Panc1 (cell line): ENCODE measurements at regions of chr1 and their contacts with region 1.

Region 1: GRCh38 chr1:88998716-88999115 is 6.3 kb upstream of the KYAT3 start:
- DNase-seq: peak; percentile 72
- ATAC-seq: peak; percentile 96
- H3K4me3 ChIP-seq: no peak overlapping the region
- H3K27ac ChIP-seq: no peak overlapping the region
- H3K4me1 ChIP-seq: no peaks in the 10 kb centered on the region
- H3K27me3 ChIP-seq: peaks cover 4% of the 10 kb centered on the region; the same call in 1 of the 2 replicates
- CTCF ChIP-seq: peak; percentile 67

Region 2: GRCh38 chr1:88983791-88984559 is 14.7 kb before region 1 on chr1:
- CTCF ChIA-PET with region 1: interaction called, 4 read pairs
- POLR2A ChIA-PET with region 1: interaction called, 14 read pairs
- in situ Hi-C with region 1: no loop called
- intact Hi-C with region 1: no loop called
- DNase-seq: peak; percentile 64
- ATAC-seq: peak; percentile 87
- H3K4me3 ChIP-seq: peak overlapping the region; percentile 46 to 61
- H3K27ac ChIP-seq: peak overlapping the region; percentile 68
- H3K4me1 ChIP-seq: peaks cover 17% of the 10 kb centered on the region
- H3K27me3 ChIP-seq: no peaks in the 10 kb centered on the region
- CTCF ChIP-seq: peak; percentile 86

Region 3: DNA sequence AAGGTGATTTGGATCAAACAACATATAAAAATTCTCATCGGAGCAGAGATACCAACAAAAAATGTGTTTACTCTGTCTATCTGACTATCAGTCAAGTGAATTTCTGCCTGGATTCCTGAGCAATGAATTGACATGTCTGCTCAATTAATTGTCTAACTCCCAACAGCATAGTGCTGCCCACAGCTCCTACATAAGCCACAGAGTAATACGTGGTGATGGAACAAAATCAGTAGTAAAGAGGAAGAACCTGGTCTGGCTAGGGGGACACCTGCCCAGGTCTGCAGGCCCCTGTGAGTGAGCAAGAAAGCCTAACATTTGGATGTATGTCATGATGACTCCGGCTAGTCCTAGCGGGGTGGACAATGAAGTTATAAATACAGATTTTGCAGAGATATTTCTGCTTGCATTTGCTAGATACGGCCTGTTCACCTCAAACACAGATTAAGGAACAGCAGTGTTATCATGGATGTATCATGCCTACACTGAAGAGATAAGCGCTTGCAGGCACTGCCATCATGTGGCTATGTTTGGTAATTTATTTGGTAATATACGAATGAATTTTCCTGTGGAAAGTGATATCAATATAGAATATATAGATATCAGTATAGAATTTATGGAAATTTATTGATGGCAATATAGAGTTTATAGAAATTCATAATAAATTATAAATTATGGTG is 456.3 kb after region 1 on chr1:
- CTCF ChIA-PET with region 1: interaction called, 3 read pairs
- POLR2A ChIA-PET with region 1: no interaction called
- in situ Hi-C with region 1: no loop called
- intact Hi-C with region 1: loop called (anchors 2 kb)
- DNase-seq: peak; percentile 38
- ATAC-seq: peak; percentile 89
- H3K4me3 ChIP-seq: no peak overlapping the region
- H3K27ac ChIP-seq: no peak overlapping the region
- H3K4me1 ChIP-seq: 0 out of 2 replicates have a peak, but pooled peaks cover 3% of the 10 kb centered on the region
- H3K27me3 ChIP-seq: peaks cover 7% of the 10 kb centered on the region; the same call in 1 of the 2 replicates
- CTCF ChIP-seq: peak; percentile 79

Region 4: DNA sequence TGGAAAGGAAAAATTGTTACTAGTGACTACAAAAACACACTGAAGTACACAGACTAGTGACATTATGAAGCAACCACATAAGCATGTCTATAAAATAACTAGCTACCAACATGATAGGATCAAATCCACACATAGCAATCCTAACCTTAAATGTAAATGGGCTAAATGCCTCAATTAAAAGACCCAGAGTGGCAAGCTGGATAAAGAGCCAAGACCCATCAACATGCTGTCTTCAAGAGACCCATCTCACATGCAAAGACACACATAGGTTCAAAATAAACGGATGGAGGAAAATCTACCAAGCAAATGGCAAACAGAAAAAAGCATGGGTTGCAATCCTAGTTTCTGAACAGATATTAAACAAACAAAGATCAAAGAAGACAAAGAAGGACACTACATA is 476.6 kb after region 1 on chr1:
- CTCF ChIA-PET with region 1: interaction called, 3 read pairs
- POLR2A ChIA-PET with region 1: interaction called, 11 read pairs
- in situ Hi-C with region 1: no loop called
- intact Hi-C with region 1: no loop called
- DNase-seq: no peak
- ATAC-seq: no peak
- H3K4me3 ChIP-seq: no peak overlapping the region
- H3K27ac ChIP-seq: no peak overlapping the region
- H3K4me1 ChIP-seq: no peaks in the 10 kb centered on the region
- H3K27me3 ChIP-seq: peaks cover 6% of the 10 kb centered on the region; the same call in 1 of the 2 replicates
- CTCF ChIP-seq: no peak

Region 5: GRCh38 chr1:89771991-89772560 is 773.4 kb after region 1 on chr1:
- CTCF ChIA-PET with region 1: no interaction called
- POLR2A ChIA-PET with region 1: no interaction called
- in situ Hi-C with region 1: no loop called
- intact Hi-C with region 1: loop called (anchors 5 kb)
- DNase-seq: no peak
- ATAC-seq: no peak
- H3K4me3 ChIP-seq: no peak overlapping the region
- H3K27ac ChIP-seq: no peak overlapping the region
- H3K4me1 ChIP-seq: no peaks in the 10 kb centered on the region
- H3K27me3 ChIP-seq: peaks cover 20% of the 10 kb centered on the region
- CTCF ChIP-seq: no peak